ENCODE measurements at regions of chr6 and their contacts with region 1.

Region 1: DNA sequence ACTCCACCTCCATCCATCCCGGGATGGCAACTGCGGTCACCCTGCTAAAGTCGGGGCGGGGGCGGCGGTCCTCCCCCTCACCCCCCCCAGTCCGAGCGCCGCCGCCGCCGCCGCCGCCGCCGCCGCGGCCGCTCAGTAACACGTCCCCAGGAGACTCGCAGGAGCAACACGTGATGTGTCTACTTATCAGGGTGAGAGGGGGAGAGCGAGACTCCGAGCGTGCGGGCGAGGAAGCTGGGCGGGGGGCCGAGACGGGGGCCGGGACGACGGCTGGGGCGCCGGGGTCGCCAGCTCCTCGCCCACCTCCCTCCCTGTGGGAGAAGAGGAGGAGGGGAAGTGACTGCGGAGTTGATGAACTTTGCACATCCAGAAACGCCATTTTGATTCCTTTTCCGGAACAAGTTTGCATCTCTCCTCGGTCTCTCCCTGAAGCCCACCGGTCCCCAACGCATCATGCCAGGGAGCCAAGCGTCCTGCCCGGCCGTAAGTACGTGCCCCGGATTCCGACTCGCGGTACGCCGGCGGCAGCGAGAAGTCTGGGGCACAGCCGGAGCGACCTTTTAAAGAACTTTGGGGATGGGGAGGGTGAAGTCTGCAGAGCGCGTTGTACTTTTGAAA is at the start of gene RREB1:
- DNase-seq: peak; percentile 60
- H3K4me3 Mint-ChIP-seq: peak within 1 kb of the TSS; percentile 90
- H3K27ac Mint-ChIP-seq: peak within 1 kb of the TSS; percentile 93
- H3K4me1 Mint-ChIP-seq: peaks cover 35% of the 10 kb centered on the region
- H3K27me3 Mint-ChIP-seq: no peaks in the 10 kb centered on the region
- total RNA-seq, gene RREB1: 10.8 to 12.2 TPM

Region 2: GRCh38 chr6:6811151-6812002 is 296.3 kb before region 1 on chr6:
- CTCF ChIA-PET with region 1: no interaction called
- intact Hi-C with region 1: loop called (anchors 2 kb)
- DNase-seq: peak; percentile 79
- H3K4me3 Mint-ChIP-seq: peak overlapping the region; percentile 66
- H3K27ac Mint-ChIP-seq: peak overlapping the region; percentile 72
- H3K4me1 Mint-ChIP-seq: peaks cover 20% of the 10 kb centered on the region
- H3K27me3 Mint-ChIP-seq: no peaks in the 10 kb centered on the region

Region 3: GRCh38 chr6:7073821-7074525 is 33.7 kb before region 1 on chr6:
- CTCF ChIA-PET with region 1: interaction called, 5 read pairs
- intact Hi-C with region 1: loop called (anchors 1 kb)
- DNase-seq: peak; percentile 84
- H3K4me3 Mint-ChIP-seq: no peak overlapping the region
- H3K27ac Mint-ChIP-seq: peak overlapping the region; percentile 9
- H3K4me1 Mint-ChIP-seq: peaks cover 12% of the 10 kb centered on the region
- H3K27me3 Mint-ChIP-seq: peaks cover 9% of the 10 kb centered on the region

Region 4: GRCh38 chr6:7154341-7155139 is 46.9 kb after region 1 on chr6:
- CTCF ChIA-PET with region 1: interaction called, 5 read pairs
- intact Hi-C with region 1: loop called (anchors 1 kb)
- DNase-seq: peak; percentile 36
- H3K4me3 Mint-ChIP-seq: peak overlapping the region; percentile 19
- H3K27ac Mint-ChIP-seq: peak overlapping the region; percentile 65
- H3K4me1 Mint-ChIP-seq: peaks cover 85% of the 10 kb centered on the region
- H3K27me3 Mint-ChIP-seq: no peaks in the 10 kb centered on the region

Region 5: GRCh38 chr6:7249946-7250643 is 142.4 kb after region 1 on chr6:
- CTCF ChIA-PET with region 1: no interaction called
- intact Hi-C with region 1: no loop called
- DNase-seq: no peak
- H3K4me3 Mint-ChIP-seq: no peak overlapping the region
- H3K27ac Mint-ChIP-seq: no peak overlapping the region
- H3K4me1 Mint-ChIP-seq: no peaks in the 10 kb centered on the region
- H3K27me3 Mint-ChIP-seq: no peaks in the 10 kb centered on the region

Region 6: GRCh38 chr6:7312616-7313504 is 205.2 kb after region 1 on chr6 and contains the start of gene SSR1:
- CTCF ChIA-PET with region 1: no interaction called
- intact Hi-C with region 1: loop called (anchors 2 kb)
- DNase-seq: peak; percentile 96
- H3K4me3 Mint-ChIP-seq: peak within 1 kb of the TSS; percentile 92
- H3K27ac Mint-ChIP-seq: peak within 1 kb of the TSS; percentile 94
- H3K4me1 Mint-ChIP-seq: peaks cover 40% of the 10 kb centered on the region
- H3K27me3 Mint-ChIP-seq: no peaks in the 10 kb centered on the region
- total RNA-seq, gene SSR1: 116 to 121 TPM